CD8-positive, alpha-beta T cell (primary cell): ENCODE measurements at regions of chr11 and their contacts with region 1.

Region 1: GRCh38 chr11:100098560-100098959 is 588.5 kb upstream of the ARHGAP42 start:
- DNase-seq: no peak
- ATAC-seq: no peak
- H3K4me3 ChIP-seq: no peak overlapping the region
- H3K4me3 Mint-ChIP-seq: no peak overlapping the region
- H3K27ac ChIP-seq: no peak overlapping the region
- H3K27ac Mint-ChIP-seq: no peak overlapping the region
- H3K4me1 ChIP-seq: no peaks in the 10 kb centered on the region
- H3K4me1 Mint-ChIP-seq: no peaks in the 10 kb centered on the region
- H3K27me3 ChIP-seq: no peaks in the 10 kb centered on the region
- H3K27me3 Mint-ChIP-seq: no peaks in the 10 kb centered on the region
- CTCF ChIP-seq: no peak

Region 2: GRCh38 chr11:100151944-100152343 is 53.4 kb after region 1 on chr11:
- CTCF ChIA-PET with region 1: no interaction called
- POLR2A ChIA-PET with region 1: no interaction called
- intact Hi-C with region 1: loop called in 1 of 2 experiments (anchors 10 kb)
- DNase-seq: no peak
- ATAC-seq: no peak
- H3K4me3 ChIP-seq: no peak overlapping the region
- H3K4me3 Mint-ChIP-seq: no peak overlapping the region
- H3K27ac ChIP-seq: no peak overlapping the region
- H3K27ac Mint-ChIP-seq: no peak overlapping the region
- H3K4me1 ChIP-seq: no peaks in the 10 kb centered on the region
- H3K4me1 Mint-ChIP-seq: no peaks in the 10 kb centered on the region
- H3K27me3 ChIP-seq: no peaks in the 10 kb centered on the region
- H3K27me3 Mint-ChIP-seq: no peaks in the 10 kb centered on the region
- CTCF ChIP-seq: no peak